Activated B cell treated with CpG ODN at 0.5 μM for 24 hours (primary cell): ENCODE measurements at regions of chr12 and their contacts with region 1.

Region 1: GRCh38 chr12:92570056-92570753 is 132.6 kb upstream of the PLEKHG7 start:
- DNase-seq: no peak
- ATAC-seq: peak; percentile 95
- H3K4me3 Mint-ChIP-seq: no peak overlapping the region
- H3K27ac Mint-ChIP-seq: no peak overlapping the region
- H3K4me1 Mint-ChIP-seq: peaks cover 28% of the 10 kb centered on the region
- H3K27me3 Mint-ChIP-seq: no peaks in the 10 kb centered on the region
- CTCF ChIP-seq: peak; percentile 99

Region 2: DNA sequence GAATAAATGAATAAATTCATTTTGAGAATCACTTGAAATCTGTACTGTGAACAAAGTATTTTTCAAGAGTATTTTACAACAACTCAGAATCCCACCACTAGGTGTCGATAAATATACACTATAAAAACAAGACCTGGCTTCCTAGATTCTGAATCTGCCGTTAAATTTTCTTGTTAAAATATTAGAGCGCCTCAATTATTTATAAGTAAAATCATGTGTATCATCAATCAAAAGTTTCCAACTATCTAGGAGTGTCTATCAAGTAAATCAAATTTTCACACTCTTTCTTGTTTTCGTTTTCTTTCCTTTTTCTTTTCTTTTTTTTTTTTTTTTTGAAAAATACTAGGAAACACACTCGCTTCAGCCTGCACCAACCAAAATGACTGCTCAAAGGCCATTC is 1208.3 kb before region 1 on chr12:
- CTCF ChIA-PET with region 1: interaction called, 7 read pairs
- POLR2A ChIA-PET with region 1: no interaction called
- intact Hi-C with region 1: loop called (anchors 1 kb)
- DNase-seq: no peak
- ATAC-seq: no peak
- H3K4me3 Mint-ChIP-seq: no peak overlapping the region
- H3K27ac Mint-ChIP-seq: no peak overlapping the region
- H3K4me1 Mint-ChIP-seq: peaks cover 8% of the 10 kb centered on the region
- H3K27me3 Mint-ChIP-seq: peaks cover 1% of the 10 kb centered on the region
- CTCF ChIP-seq: no peak

Region 3: DNA sequence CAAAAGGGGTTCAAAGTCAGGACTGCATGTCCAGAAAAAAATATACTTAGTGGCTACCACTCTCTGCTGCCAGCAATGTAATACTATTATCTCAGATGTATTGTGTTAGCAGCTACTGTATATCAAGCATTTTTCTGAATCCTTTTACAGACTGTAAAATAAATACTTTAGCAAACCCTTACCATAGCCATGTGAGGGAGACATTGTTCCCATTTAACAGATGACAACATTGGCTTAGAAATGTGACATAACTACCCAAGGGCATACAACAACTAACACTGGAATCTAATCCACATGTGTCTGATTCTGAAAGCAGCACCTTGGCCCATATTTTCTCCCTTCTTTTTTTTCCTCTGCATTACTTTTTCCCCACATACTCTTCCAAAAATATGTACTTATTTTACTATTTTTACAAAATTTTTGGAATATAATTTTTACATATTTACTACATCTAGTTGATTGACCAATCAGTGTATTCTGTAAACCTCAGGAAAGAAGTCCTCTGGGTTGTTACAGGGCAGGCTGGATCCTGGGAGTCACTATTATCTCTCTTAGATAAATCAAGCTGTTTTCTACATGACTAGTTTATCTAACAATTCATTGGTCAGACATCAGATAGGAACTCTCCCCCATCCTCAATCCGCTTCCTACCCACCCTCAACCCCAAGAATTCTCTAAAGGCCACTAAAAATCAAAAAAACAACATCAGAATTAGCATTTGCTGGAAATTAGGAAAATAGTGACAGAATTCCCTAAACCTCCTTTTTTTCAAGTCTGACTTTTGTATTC is 578.6 kb before region 1 on chr12:
- CTCF ChIA-PET with region 1: interaction called, 7 read pairs
- POLR2A ChIA-PET with region 1: no interaction called
- intact Hi-C with region 1: loop called (anchors 1 kb)
- DNase-seq: no peak
- ATAC-seq: peak; percentile 47
- H3K4me3 Mint-ChIP-seq: no peak overlapping the region
- H3K27ac Mint-ChIP-seq: no peak overlapping the region
- H3K4me1 Mint-ChIP-seq: peaks cover 2% of the 10 kb centered on the region
- H3K27me3 Mint-ChIP-seq: no peaks in the 10 kb centered on the region
- CTCF ChIP-seq: no peak

Region 4: DNA sequence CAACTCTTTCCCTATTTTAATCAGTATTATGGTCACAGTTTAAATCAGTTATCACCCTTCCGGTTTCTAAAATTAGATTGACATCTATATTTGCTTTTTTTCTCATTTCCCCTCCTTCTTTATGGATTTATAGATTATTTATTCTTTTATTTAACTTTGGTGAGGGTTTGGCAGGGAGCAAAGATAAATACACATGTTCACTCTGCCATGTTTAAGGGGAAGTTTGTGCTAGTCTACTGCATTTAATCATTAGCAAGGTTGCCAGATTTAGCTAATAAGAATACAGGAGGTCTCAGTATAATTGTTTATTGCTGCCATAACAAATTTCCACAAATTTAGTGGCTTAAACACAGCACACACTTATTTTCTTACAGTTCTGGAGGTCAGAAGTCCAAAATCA is 220.6 kb before region 1 on chr12:
- CTCF ChIA-PET with region 1: no interaction called
- POLR2A ChIA-PET with region 1: no interaction called
- intact Hi-C with region 1: no loop called
- DNase-seq: no peak
- ATAC-seq: no peak
- H3K4me3 Mint-ChIP-seq: no peak overlapping the region
- H3K27ac Mint-ChIP-seq: no peak overlapping the region
- H3K4me1 Mint-ChIP-seq: peaks cover 5% of the 10 kb centered on the region
- H3K27me3 Mint-ChIP-seq: no peaks in the 10 kb centered on the region
- CTCF ChIP-seq: no peak

Region 5: GRCh38 chr12:92396647-92397252 is 173.5 kb before region 1 on chr12:
- CTCF ChIA-PET with region 1: interaction called, 4 read pairs
- POLR2A ChIA-PET with region 1: interaction called, 5 read pairs
- intact Hi-C with region 1: loop called (anchors 1 kb)
- DNase-seq: no peak
- ATAC-seq: no peak
- H3K4me3 Mint-ChIP-seq: no peak overlapping the region
- H3K27ac Mint-ChIP-seq: peak overlapping the region; percentile 93
- H3K4me1 Mint-ChIP-seq: peaks cover 70% of the 10 kb centered on the region
- H3K27me3 Mint-ChIP-seq: no peaks in the 10 kb centered on the region
- CTCF ChIP-seq: no peak

Region 6: GRCh38 chr12:92466391-92467305 is 103.6 kb before region 1 on chr12:
- CTCF ChIA-PET with region 1: interaction called, 6 read pairs
- POLR2A ChIA-PET with region 1: interaction called, 21 read pairs
- intact Hi-C with region 1: loop called (anchors 1 kb)
- DNase-seq: peak; percentile 51
- ATAC-seq: peak; percentile 74
- H3K4me3 Mint-ChIP-seq: peak overlapping the region; percentile 93
- H3K27ac Mint-ChIP-seq: peak overlapping the region; percentile 99
- H3K4me1 Mint-ChIP-seq: peaks cover 94% of the 10 kb centered on the region
- H3K27me3 Mint-ChIP-seq: no peaks in the 10 kb centered on the region
- CTCF ChIP-seq: no peak

Region 7: GRCh38 chr12:92593734-92594402 is 23.7 kb after region 1 on chr12:
- CTCF ChIA-PET with region 1: interaction called, 4 read pairs
- POLR2A ChIA-PET with region 1: interaction called, 4 read pairs
- intact Hi-C with region 1: loop called (anchors 1 kb)
- DNase-seq: peak; percentile 49
- ATAC-seq: peak; percentile 92
- H3K4me3 Mint-ChIP-seq: peak overlapping the region; percentile 75
- H3K27ac Mint-ChIP-seq: peak overlapping the region; percentile 96
- H3K4me1 Mint-ChIP-seq: peaks cover 46% of the 10 kb centered on the region
- H3K27me3 Mint-ChIP-seq: no peaks in the 10 kb centered on the region
- CTCF ChIP-seq: no peak

Region 8: DNA sequence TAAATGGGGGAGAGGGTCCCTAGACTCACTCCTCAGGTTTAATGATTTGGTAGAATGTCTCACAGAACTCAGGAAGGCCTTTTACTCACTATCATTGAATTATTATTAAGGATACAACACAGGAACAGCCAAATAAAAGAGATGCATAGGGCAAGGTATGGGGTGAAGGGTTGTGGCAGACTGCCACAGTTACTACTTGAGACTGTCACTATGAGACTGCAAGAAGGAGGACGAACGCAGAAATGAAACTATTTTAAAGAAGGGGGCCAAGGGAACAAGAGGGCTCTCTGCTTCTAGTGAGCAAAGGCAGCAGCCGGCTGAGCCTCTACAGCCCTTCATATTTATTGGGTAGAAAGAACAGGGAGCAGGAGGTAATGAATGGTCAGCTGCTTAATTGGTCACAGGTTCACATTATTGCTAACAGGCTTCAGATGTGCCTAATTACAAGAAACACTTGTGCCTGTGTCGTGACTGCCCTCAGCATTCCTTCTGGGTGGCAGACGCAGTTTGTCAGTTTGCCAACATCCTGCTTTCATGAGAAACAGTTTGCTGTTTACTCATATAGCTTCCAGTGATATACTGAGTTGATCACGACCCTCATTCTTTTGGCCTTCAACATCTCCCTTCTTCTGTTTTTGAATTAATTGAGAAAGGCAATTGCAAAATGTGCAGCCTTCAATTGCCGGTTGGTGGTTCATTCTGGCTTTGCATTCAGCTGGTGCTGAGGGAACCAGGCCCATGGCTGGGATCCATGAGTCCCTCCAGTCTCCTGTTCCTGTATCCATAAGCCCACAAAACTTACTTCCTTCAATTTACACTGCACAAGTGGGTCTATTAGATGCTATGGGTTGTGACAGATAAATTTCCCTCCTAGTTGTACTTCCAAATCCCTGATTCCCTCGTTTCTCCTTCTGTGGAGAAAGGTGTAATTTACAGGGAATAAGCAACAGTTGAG is 49.8 kb after region 1 on chr12:
- CTCF ChIA-PET with region 1: no interaction called
- POLR2A ChIA-PET with region 1: no interaction called
- intact Hi-C with region 1: no loop called
- DNase-seq: no peak
- ATAC-seq: no peak
- H3K4me3 Mint-ChIP-seq: no peak overlapping the region
- H3K27ac Mint-ChIP-seq: no peak overlapping the region
- H3K4me1 Mint-ChIP-seq: no peaks in the 10 kb centered on the region
- H3K27me3 Mint-ChIP-seq: no peaks in the 10 kb centered on the region
- CTCF ChIP-seq: no peak